ENCODE measurements at regions of chr14 and their contacts with region 1.

Region 1: DNA sequence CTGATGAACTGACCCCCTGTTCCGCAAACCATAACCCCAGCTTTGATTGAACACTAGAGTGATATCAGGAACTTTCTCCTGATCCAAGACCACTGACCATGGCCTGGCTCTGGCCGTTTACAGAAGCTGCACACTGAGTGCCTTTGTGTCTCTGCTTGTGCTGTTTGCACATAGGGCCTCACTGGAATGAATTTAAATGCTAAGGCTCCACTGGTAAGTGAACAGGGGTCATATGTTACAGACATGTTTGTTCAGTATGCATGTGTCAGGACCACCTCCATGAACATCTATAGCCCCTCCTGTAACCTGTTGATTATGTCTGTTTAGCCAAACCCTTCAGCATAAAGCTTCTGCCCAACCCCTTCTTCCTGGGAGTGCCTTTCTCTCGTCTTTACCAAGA is 1239.8 kb downstream of the TMEM121 start:
- DNase-seq: no peak
- ATAC-seq: no peak
- H3K4me3 ChIP-seq: no peak overlapping the region
- H3K4me3 Mint-ChIP-seq: peak overlapping the region in 7 of 10 donors; percentile 9 to 84 (median 68)
- H3K27ac ChIP-seq: no peak overlapping the region
- H3K27ac Mint-ChIP-seq: peak overlapping the region in 6 of 9 donors; percentile 17 to 94 (median 88)
- H3K4me1 ChIP-seq: peaks cover 7 to 23% of the 10 kb centered on the region in 2 donors
- H3K4me1 Mint-ChIP-seq: peaks cover 17 to 58% (median 43%) of the 10 kb centered on the region in 7 donors
- H3K27me3 ChIP-seq: no peaks in the 10 kb centered on the region
- H3K27me3 Mint-ChIP-seq: no peaks in the 10 kb centered on the region

Region 2: GRCh38 chr14:106657460-106657859 is 108.7 kb before region 1 on chr14:
- CTCF ChIA-PET with region 1: interaction called, 5 read pairs
- POLR2A ChIA-PET with region 1: no interaction called
- intact Hi-C with region 1: loop called in 1 of 2 experiments (anchors 1 kb)
- DNase-seq: peak; percentile 23 to 70 (median 53)
- ATAC-seq: peak; percentile 83
- H3K4me3 ChIP-seq: no peak overlapping the region
- H3K4me3 Mint-ChIP-seq: peak overlapping the region in 5 of 10 donors; percentile 14 to 77 (median 19)
- H3K27ac ChIP-seq: no peak overlapping the region
- H3K27ac Mint-ChIP-seq: no peak overlapping the region
- H3K4me1 ChIP-seq: peaks cover 5 to 15% of the 10 kb centered on the region in 2 donors
- H3K4me1 Mint-ChIP-seq: peaks cover 9 to 37% (median 26%) of the 10 kb centered on the region in 7 donors
- H3K27me3 ChIP-seq: no peaks in the 10 kb centered on the region
- H3K27me3 Mint-ChIP-seq: peaks cover 0 to 36% (median 0%) of the 10 kb centered on the region in 5 donors